Left ventricle myocardium superior (tissue), 1 donor: ENCODE measurements at regions of chr12 and their contacts with region 1.

Region 1: GRCh38 chr12:64419696-64420095 is 15.5 kb downstream of the XPOT start:
- DNase-seq: no peak
- ATAC-seq: no peak

Region 2: GRCh38 chr12:64160711-64161060 is 259.0 kb before region 1 on chr12:
- intact Hi-C with region 1: no loop called
- DNase-seq: no peak
- ATAC-seq: no peak

Region 3: GRCh38 chr12:64332938-64333337 is 86.8 kb before region 1 on chr12:
- intact Hi-C with region 1: no loop called
- DNase-seq: no peak
- ATAC-seq: no peak

Region 4: DNA sequence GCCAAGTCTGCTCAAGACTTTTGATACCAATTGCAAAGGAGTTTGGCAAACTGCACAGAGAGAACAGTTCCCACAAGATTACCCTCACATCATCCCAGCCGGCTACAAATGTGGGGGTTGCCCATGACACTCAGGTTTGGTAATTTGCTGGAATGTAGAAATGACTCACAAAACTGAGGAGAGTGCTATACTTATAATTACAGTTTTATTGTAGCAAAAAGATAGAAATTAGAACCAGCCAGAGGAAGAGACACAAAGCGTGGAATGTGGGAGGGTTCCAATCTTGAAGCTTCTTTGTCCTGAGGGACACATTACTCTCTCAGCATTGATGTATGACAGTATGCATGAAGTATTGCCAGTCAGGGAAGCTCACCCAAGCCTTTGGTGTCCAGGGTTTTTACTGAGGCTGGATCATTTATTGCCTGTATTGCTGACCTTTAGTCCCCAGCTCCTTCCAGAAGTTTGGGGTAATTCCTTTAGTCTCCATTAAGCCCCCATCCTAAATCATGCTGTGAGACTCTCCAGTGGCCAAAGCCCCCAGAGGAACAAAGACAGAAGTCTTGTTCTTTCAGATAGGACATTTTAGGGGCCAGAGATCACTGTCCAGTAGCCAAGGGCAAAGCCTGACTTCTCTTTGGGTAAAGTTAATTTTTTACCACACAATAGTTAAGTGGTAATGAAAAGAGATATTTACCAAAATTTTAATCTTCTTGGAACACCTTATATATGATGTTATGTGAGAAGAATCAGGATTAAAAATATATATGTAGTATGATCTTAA is 42.1 kb after region 1 on chr12:
- intact Hi-C with region 1: no loop called
- DNase-seq: no peak
- ATAC-seq: no peak

Region 5: DNA sequence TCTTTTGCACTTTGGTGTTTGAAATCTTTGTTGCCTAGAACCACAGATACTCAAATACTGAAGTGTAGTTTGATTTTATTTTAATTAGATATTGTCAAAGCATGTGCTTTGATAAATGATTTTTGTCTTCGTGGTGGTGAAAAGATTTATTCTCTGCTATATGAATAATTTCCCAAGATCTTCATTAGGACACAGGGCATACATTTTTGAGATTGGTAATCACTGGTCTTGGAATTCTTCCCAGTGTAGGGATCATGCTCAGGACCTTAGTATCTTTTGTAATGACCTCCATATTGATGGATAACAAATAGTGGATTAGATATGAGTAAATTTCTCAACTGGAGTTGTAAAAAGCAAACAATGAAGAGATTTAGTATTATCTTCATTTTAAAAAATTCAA is 60.5 kb after region 1 on chr12:
- intact Hi-C with region 1: loop called (anchors 10 kb)
- DNase-seq: no peak
- ATAC-seq: no peak